ENCODE measurements at regions of chr19 and their contacts with region 1.

Region 1: DNA sequence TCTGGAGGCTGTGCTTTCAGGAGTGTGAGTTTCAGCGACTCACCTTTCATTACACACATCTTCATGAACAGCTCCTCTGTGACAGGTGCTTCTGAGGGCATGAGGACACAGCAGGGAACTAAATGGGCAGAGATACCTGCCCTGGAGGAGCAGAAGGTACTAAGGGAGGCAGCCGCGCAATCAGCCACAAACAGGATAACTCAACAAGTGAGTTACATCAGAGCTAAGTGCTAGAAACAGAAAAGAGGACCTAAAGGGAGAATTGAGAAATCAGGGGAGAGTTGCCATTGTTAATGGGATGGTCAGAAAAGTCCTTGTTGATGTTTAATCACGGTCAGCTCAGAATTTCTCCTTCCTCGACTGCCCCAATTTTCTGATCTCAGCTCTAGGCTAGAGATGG is 42.5 kb downstream of the SYDE1 start:
- DNase-seq: no peak
- ATAC-seq: no peak
- H3K4me3 ChIP-seq: no peak overlapping the region
- H3K4me3 Mint-ChIP-seq: no peak overlapping the region
- H3K27ac ChIP-seq: no peak overlapping the region
- H3K27ac Mint-ChIP-seq: no peak overlapping the region
- H3K4me1 ChIP-seq: no peaks in the 10 kb centered on the region
- H3K4me1 Mint-ChIP-seq: no peaks in the 10 kb centered on the region
- H3K27me3 ChIP-seq: no peaks in the 10 kb centered on the region
- H3K27me3 Mint-ChIP-seq: peaks cover 6 to 17% of the 10 kb centered on the region in 2 donors
- CTCF ChIP-seq: no peak

Region 2: DNA sequence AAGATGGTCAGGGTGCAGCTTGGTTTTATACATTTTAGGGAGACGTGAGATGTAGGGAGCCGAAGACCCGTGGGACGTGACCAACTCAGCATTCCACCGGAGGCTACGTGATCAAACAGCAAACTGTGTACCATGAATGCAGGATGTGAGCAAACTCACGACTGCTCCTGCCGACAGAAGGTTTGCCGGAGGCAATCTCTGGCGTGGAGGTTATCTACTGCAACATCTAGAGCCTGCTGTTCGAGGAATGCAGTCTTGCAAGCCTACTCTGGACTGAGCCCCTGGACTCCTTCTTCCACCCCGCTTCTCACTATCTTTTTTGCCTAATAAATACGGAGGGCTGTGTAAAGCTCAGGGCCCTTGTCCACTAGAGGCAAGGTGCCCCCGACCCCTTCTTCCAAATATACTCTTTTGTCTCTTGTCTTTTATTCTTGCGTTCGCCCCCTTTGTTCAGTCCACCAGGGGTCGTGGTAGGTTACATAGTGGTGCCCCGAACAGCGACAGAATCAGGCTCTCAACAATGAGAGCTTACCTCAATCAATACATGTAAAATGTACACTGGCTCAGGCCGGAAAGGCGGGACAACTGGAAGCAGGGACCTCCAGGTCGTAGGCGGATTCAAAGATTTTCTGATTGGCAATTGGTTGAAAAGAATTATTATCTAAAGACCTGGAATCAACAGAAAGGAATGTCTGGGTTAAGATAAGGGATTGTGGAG is 76.6 kb before region 1 on chr19:
- intact Hi-C with region 1: no loop called
- DNase-seq: no peak
- ATAC-seq: no peak
- H3K4me3 ChIP-seq: no peak overlapping the region
- H3K4me3 Mint-ChIP-seq: no peak overlapping the region
- H3K27ac ChIP-seq: no peak overlapping the region
- H3K27ac Mint-ChIP-seq: no peak overlapping the region
- H3K4me1 ChIP-seq: no peaks in the 10 kb centered on the region
- H3K4me1 Mint-ChIP-seq: no peaks in the 10 kb centered on the region
- H3K27me3 ChIP-seq: no peaks in the 10 kb centered on the region
- H3K27me3 Mint-ChIP-seq: peaks cover 0 to 3% of the 10 kb centered on the region in 2 donors
- CTCF ChIP-seq: no peak

Region 3: GRCh38 chr19:15091901-15092753 is 57.6 kb before region 1 on chr19:
- intact Hi-C with region 1: loop called (anchors 1 kb)
- DNase-seq: peak; percentile 20 to 88
- ATAC-seq: peak; percentile 77 to 78 (median 78)
- H3K4me3 ChIP-seq: no peak overlapping the region
- H3K4me3 Mint-ChIP-seq: no peak overlapping the region
- H3K27ac ChIP-seq: no peak overlapping the region
- H3K27ac Mint-ChIP-seq: no peak overlapping the region
- H3K4me1 ChIP-seq: peaks cover 7% of the 10 kb centered on the region
- H3K4me1 Mint-ChIP-seq: no peaks in the 10 kb centered on the region
- H3K27me3 ChIP-seq: no peaks in the 10 kb centered on the region
- H3K27me3 Mint-ChIP-seq: peaks cover 9 to 12% of the 10 kb centered on the region in 2 donors
- CTCF ChIP-seq: peak; percentile 76

Region 4: DNA sequence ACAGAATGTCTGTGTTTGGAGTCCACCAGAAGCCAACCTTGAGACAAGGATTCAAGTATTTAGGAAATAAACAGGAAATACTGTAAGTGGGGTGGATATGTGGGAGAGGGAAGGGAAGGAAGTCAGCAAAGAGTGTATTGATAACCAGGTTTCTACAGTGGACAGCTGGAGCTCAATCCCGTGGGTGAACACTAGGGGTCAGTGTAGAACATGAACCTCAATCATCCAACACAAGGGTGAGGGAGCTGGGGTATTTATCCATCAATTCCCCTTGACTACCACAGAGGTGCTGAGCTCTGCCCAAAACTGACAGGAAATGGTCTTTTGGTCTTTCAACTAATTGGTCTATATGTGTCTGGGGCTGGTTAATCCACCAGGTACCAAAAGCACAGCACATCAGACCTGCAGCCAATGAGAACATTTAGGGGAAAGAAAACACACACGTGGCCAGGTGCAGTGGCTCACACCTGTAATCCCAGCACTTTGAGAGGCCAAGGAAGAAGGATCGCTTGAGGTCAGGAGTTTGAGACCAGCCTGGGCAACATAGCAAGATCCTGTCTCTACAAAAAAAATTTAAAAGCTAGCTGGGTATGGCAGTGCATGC is 48.2 kb before region 1 on chr19:
- intact Hi-C with region 1: loop called (anchors 1 kb)
- DNase-seq: peak; percentile 31 to 76
- ATAC-seq: peak in 2 of 3 donors; percentile 72 to 81
- H3K4me3 ChIP-seq: no peak overlapping the region
- H3K4me3 Mint-ChIP-seq: no peak overlapping the region
- H3K27ac ChIP-seq: no peak overlapping the region
- H3K27ac Mint-ChIP-seq: no peak overlapping the region
- H3K4me1 ChIP-seq: no peaks in the 10 kb centered on the region
- H3K4me1 Mint-ChIP-seq: peaks cover 2% of the 10 kb centered on the region in 2 donors
- H3K27me3 ChIP-seq: peaks cover 1% of the 10 kb centered on the region
- H3K27me3 Mint-ChIP-seq: peaks cover 20 to 22% of the 10 kb centered on the region in 2 donors
- CTCF ChIP-seq: peak; percentile 66

Region 5: GRCh38 chr19:15125232-15126067 is 24.3 kb before region 1 on chr19:
- intact Hi-C with region 1: no loop called
- DNase-seq: peak; percentile 98
- ATAC-seq: peak; percentile 83 to 94 (median 87)
- H3K4me3 ChIP-seq: peak overlapping the region; percentile 80
- H3K4me3 Mint-ChIP-seq: peak overlapping the region; percentile 94
- H3K27ac ChIP-seq: peak overlapping the region; percentile 86
- H3K27ac Mint-ChIP-seq: peak overlapping the region; percentile 96 to 99
- H3K4me1 ChIP-seq: peaks cover 17% of the 10 kb centered on the region
- H3K4me1 Mint-ChIP-seq: peaks cover 17 to 24% of the 10 kb centered on the region in 2 donors
- H3K27me3 ChIP-seq: no peaks in the 10 kb centered on the region
- H3K27me3 Mint-ChIP-seq: peaks cover 4 to 7% of the 10 kb centered on the region in 2 donors
- CTCF ChIP-seq: no peak

Region 6: DNA sequence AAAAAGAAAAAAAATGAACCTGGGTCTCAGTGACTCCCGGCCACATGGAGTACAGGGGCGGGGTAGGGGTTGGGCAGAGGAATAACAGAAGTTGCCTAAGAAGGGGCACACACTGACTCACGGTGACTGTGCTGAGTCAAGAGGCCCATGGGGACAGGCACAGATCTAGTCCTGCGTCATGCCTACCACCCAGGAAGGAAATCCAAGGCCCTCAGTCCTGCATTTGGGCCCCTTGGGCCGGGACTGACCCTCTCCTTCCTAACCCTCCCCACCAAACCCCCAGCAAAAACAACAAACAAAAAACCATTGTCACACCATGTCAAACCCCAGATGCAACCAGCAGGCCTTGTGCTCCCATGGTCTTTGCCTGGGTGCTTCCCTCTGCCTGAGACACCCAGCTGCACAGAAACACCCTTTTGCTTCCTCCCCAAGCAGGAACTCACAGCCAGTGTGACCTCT is 60.6 kb after region 1 on chr19:
- intact Hi-C with region 1: no loop called
- DNase-seq: no peak
- ATAC-seq: peak; percentile 40 to 81 (median 42)
- H3K4me3 ChIP-seq: no peak overlapping the region
- H3K4me3 Mint-ChIP-seq: no peak overlapping the region
- H3K27ac ChIP-seq: no peak overlapping the region
- H3K27ac Mint-ChIP-seq: no peak overlapping the region
- H3K4me1 ChIP-seq: peaks cover 5% of the 10 kb centered on the region
- H3K4me1 Mint-ChIP-seq: no peaks in the 10 kb centered on the region
- H3K27me3 ChIP-seq: no peaks in the 10 kb centered on the region
- H3K27me3 Mint-ChIP-seq: peaks cover 0 to 2% of the 10 kb centered on the region in 2 donors
- CTCF ChIP-seq: no peak